ENCODE measurements at regions of chr9 and their contacts with region 1.

Region 1: GRCh38 chr9:137738703-137739102 is 119.9 kb downstream of the EHMT1 start:
- DNase-seq: peak; percentile 56
- ATAC-seq: no peak
- H3K4me3 ChIP-seq: no peak overlapping the region
- H3K4me3 Mint-ChIP-seq: peak overlapping the region; percentile 87
- H3K27ac ChIP-seq: peak overlapping the region; percentile 73 to 82
- H3K27ac Mint-ChIP-seq: peak overlapping the region; percentile 93
- H3K4me1 ChIP-seq: peaks cover 19 to 31% of the 10 kb centered on the region in 2 donors
- H3K4me1 Mint-ChIP-seq: peaks cover 58% of the 10 kb centered on the region
- H3K27me3 ChIP-seq: no peaks in the 10 kb centered on the region
- H3K27me3 Mint-ChIP-seq: no peaks in the 10 kb centered on the region
- CTCF ChIP-seq: no peak

Region 2: DNA sequence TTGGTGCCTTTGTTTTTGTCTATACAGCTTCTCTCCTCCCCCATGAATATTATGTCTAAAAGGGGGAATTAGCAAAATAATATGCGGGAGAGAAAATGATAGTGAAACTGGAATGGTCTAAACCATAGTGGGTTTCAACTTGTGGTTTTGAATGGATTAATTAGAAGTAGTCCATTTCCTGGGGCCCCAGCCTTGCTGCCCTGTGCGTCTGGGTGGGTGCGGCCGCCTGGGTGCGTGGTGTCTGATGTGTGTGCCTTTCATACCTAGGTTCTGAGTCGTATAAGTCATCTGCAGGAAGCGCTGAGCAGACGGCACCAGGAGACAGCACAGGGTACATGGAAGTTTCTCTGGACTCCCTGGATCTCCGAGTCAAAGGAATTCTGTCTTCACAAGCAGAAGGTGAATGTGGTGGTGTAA is 18.9 kb after region 1 on chr9:
- CTCF ChIA-PET with region 1: interaction called, 6 read pairs
- POLR2A ChIA-PET with region 1: no interaction called
- intact Hi-C with region 1: loop called (anchors 1 kb)
- DNase-seq: peak; percentile 76
- ATAC-seq: peak; percentile 18
- H3K4me3 ChIP-seq: peak overlapping the region in 2 of 5 experiments; percentile 13 to 23
- H3K4me3 Mint-ChIP-seq: peak overlapping the region; percentile 78
- H3K27ac ChIP-seq: peak overlapping the region; percentile 88
- H3K27ac Mint-ChIP-seq: peak overlapping the region; percentile 99
- H3K4me1 ChIP-seq: peaks cover 60% of the 10 kb centered on the region in 2 donors
- H3K4me1 Mint-ChIP-seq: peaks cover 63% of the 10 kb centered on the region
- H3K27me3 ChIP-seq: no peaks in the 10 kb centered on the region
- H3K27me3 Mint-ChIP-seq: no peaks in the 10 kb centered on the region
- CTCF ChIP-seq: no peak

Measured in B cell (primary cell).